Calu3 (cell line): ENCODE measurements at regions of chr1 and their contacts with region 1.

Region 1: GRCh38 chr1:201895913-201896807 is 7.5 kb downstream of the SHISA4 start:
- DNase-seq: peak; percentile 97
- H3K4me3 Mint-ChIP-seq: no peak overlapping the region
- H3K27ac Mint-ChIP-seq: no peak overlapping the region
- H3K4me1 Mint-ChIP-seq: peaks cover 10% of the 10 kb centered on the region
- H3K27me3 Mint-ChIP-seq: peaks cover 16% of the 10 kb centered on the region
- CTCF ChIP-seq: peak; percentile 96

Region 2: DNA sequence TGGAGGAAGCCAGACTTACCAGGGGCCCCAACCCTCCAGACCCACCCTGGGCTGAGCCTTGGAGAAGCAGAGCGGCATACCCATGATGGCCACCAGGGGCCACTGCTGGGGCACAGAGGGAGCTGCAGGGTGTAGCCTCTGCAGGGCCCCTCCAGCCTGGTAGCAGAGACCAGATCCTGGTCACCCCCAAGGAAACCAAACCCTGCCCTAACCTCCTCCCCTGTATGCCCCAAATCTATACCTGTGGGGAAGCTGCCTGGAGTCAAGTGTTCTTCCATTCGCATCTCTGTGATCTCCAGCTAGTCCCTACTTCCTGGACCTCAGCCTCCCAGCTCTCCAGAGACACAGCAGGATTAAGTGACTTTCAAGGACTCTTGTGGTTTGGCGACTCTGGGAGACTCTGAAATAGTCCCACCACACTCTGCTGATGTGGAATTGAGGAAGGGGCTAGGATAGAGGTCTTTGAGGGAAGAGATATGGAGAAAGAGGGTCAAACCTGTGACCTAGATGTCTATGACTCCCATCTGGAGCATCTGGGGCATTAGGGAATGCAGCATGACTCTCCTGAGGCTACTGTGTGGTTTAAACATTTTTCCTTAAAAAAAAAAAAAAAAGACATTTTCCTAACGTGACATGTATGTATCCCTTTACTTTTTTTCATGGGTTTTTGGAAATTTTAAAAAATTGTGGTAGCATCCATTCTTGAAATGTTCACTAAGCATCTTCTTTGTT is 186.4 kb before region 1 on chr1:
- CTCF ChIA-PET with region 1: no interaction called
- intact Hi-C with region 1: no loop called
- DNase-seq: peak; percentile 88
- H3K4me3 Mint-ChIP-seq: no peak overlapping the region
- H3K27ac Mint-ChIP-seq: no peak overlapping the region
- H3K4me1 Mint-ChIP-seq: peaks cover 25% of the 10 kb centered on the region
- H3K27me3 Mint-ChIP-seq: no peaks in the 10 kb centered on the region
- CTCF ChIP-seq: peak; percentile 97

Region 3: DNA sequence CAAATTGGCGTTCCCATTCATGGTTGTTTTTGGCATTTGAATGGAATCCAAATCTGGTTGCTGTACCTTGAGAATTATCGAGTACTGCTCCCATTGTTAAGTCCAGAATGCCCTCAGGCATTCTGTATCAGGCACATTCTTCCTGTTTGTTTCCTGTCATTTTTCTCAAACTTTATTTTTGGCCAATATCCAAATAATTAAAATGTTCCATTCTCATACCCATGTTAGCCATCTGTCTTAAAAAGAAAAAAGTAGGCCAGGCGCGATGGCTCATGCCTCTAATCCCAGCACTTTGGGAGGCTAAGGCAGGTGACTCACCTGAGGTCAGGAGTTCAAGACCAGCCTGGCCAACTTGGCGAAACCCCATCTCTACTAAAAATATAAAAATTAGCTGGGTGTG is 36.7 kb before region 1 on chr1:
- CTCF ChIA-PET with region 1: no interaction called
- intact Hi-C with region 1: no loop called
- DNase-seq: no peak
- H3K4me3 Mint-ChIP-seq: no peak overlapping the region
- H3K27ac Mint-ChIP-seq: no peak overlapping the region
- H3K4me1 Mint-ChIP-seq: peaks cover 14% of the 10 kb centered on the region
- H3K27me3 Mint-ChIP-seq: no peaks in the 10 kb centered on the region
- CTCF ChIP-seq: no peak

Region 4: GRCh38 chr1:201877877-201878401 is 18.2 kb before region 1 on chr1:
- CTCF ChIA-PET with region 1: interaction called, 10 read pairs
- intact Hi-C with region 1: no loop called
- DNase-seq: peak; percentile 51
- H3K4me3 Mint-ChIP-seq: no peak overlapping the region
- H3K27ac Mint-ChIP-seq: no peak overlapping the region
- H3K4me1 Mint-ChIP-seq: no peaks in the 10 kb centered on the region
- H3K27me3 Mint-ChIP-seq: no peaks in the 10 kb centered on the region
- CTCF ChIP-seq: peak; percentile 41

Region 5: DNA sequence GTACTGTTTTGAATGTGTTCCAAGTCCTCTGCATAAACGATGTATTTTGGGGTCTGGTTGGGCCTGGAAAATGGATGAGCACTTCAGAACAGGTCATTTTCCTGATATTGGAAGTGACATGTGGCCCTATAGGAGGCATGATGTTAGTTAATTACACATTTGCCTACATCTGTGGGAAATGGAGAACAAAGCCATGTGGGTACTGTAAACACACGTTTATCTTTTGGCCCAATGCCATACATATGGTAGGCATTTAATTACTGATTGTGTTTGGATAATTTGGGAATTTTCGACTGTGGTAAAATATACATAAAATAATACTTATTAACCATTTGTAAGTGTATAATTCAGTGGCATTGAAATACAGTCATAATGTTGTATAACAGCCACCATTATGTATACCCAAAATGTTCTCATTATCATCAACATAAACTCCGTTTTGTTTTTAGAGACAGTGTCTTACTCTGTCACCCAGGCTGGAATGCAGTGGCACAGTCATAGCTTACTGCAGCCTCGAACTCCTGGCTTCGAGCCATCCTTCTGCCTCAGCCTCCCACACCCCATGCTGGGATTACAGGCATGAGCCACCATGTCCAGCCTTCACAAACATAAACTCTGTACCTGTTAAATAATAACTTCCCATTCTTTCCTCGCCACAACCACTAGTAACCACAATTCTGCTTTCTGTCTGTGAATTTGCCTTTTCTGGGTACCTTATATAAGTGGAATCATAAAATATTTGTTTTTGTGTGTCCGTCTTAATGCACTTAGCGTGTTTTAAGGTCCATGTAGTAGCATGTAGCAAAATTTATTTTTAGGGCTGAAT is 74.4 kb after region 1 on chr1:
- CTCF ChIA-PET with region 1: interaction called, 74 read pairs
- intact Hi-C with region 1: loop called (anchors 1 kb)
- DNase-seq: no peak
- H3K4me3 Mint-ChIP-seq: no peak overlapping the region
- H3K27ac Mint-ChIP-seq: peak overlapping the region; percentile 67
- H3K4me1 Mint-ChIP-seq: no peaks in the 10 kb centered on the region
- H3K27me3 Mint-ChIP-seq: no peaks in the 10 kb centered on the region
- CTCF ChIP-seq: no peak

Region 6: GRCh38 chr1:201982623-201983379 is 86.6 kb after region 1 on chr1 and contains the start of gene RNPEP:
- CTCF ChIA-PET with region 1: interaction called, 10 read pairs
- intact Hi-C with region 1: no loop called
- DNase-seq: peak; percentile 77
- H3K4me3 Mint-ChIP-seq: peak within 1 kb of the TSS; percentile 96
- H3K27ac Mint-ChIP-seq: peak within 1 kb of the TSS; percentile 84
- H3K4me1 Mint-ChIP-seq: peaks cover 9% of the 10 kb centered on the region
- H3K27me3 Mint-ChIP-seq: no peaks in the 10 kb centered on the region
- CTCF ChIP-seq: peak; percentile 12
- total RNA-seq, gene RNPEP: 86.1 and 91.6 TPM in 2 replicates

Region 7: GRCh38 chr1:201999625-202000238 is 103.6 kb after region 1 on chr1:
- CTCF ChIA-PET with region 1: interaction called, 10 read pairs
- intact Hi-C with region 1: no loop called
- DNase-seq: peak; percentile 65
- H3K4me3 Mint-ChIP-seq: no peak overlapping the region
- H3K27ac Mint-ChIP-seq: no peak overlapping the region
- H3K4me1 Mint-ChIP-seq: no peaks in the 10 kb centered on the region
- H3K27me3 Mint-ChIP-seq: no peaks in the 10 kb centered on the region
- CTCF ChIP-seq: peak; percentile 85

Region 8: GRCh38 chr1:202135221-202135721 is 239.1 kb after region 1 on chr1:
- CTCF ChIA-PET with region 1: interaction called, 13 read pairs
- intact Hi-C with region 1: loop called (anchors 1 kb)
- DNase-seq: peak; percentile 62
- H3K4me3 Mint-ChIP-seq: no peak overlapping the region
- H3K27ac Mint-ChIP-seq: no peak overlapping the region
- H3K4me1 Mint-ChIP-seq: no peaks in the 10 kb centered on the region
- H3K27me3 Mint-ChIP-seq: no peaks in the 10 kb centered on the region
- CTCF ChIP-seq: peak; percentile 84